Activated CD4-positive, alpha-beta T cell treated with anti-CD3 and anti-CD28 coated beads, Interleukin-2, amount 10 ng/mL, durations not matched to agents 24 days and 14 days (primary cell): ENCODE measurements at regions of chr2 and their contacts with region 1.

Region 1: GRCh38 chr2:10079870-10080535 is at the start of gene CYS1:
- DNase-seq: peak; percentile 78
- H3K4me3 Mint-ChIP-seq: peak within 1 kb of the TSS; percentile 81
- H3K27ac Mint-ChIP-seq: peak within 1 kb of the TSS; percentile 75
- H3K4me1 Mint-ChIP-seq: peaks cover 30% of the 10 kb centered on the region
- H3K27me3 Mint-ChIP-seq: peaks cover 73% of the 10 kb centered on the region
- total RNA-seq, gene CYS1: 0.24 and 0.63 TPM in 2 replicates

Region 2: DNA sequence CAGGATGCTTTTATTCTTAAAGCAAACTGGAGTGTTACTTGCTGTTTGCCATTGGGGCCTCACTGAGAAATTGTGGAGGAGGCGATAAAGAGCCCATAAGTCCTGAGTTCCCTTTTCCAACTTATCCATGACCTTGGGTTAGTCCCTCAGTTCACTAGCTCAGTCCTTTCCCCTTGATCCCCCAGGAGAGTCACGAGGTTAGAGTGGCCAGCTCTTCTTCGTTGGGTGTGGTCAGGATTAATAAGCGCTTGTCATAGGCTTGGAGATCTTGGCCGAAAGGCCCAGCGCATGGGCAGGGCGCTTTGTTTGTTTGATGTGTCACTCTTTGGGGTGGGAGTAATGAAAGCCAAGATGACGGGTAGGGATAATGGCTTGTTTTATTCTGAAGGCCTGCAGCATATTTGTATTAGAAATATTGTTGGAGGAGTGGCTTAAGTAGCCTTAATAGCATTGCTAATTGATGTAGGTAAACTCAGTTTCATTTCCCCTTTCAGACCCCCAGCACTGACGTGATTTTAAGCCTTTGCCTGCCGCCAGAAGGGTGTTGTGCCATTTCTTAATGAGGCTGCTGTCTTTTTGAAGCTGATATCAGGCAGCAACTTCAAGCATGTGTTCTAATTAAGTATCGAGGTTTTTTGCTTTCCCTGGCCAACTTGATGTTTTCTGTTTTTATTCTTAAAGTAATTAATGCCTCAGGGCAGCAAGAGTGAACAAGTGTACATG is 112.8 kb before region 1 on chr2:
- intact Hi-C with region 1: no loop called
- DNase-seq: no peak
- H3K4me3 Mint-ChIP-seq: no peak overlapping the region
- H3K27ac Mint-ChIP-seq: no peak overlapping the region
- H3K4me1 Mint-ChIP-seq: peaks cover 14% of the 10 kb centered on the region
- H3K27me3 Mint-ChIP-seq: peaks cover 3% of the 10 kb centered on the region

Region 3: DNA sequence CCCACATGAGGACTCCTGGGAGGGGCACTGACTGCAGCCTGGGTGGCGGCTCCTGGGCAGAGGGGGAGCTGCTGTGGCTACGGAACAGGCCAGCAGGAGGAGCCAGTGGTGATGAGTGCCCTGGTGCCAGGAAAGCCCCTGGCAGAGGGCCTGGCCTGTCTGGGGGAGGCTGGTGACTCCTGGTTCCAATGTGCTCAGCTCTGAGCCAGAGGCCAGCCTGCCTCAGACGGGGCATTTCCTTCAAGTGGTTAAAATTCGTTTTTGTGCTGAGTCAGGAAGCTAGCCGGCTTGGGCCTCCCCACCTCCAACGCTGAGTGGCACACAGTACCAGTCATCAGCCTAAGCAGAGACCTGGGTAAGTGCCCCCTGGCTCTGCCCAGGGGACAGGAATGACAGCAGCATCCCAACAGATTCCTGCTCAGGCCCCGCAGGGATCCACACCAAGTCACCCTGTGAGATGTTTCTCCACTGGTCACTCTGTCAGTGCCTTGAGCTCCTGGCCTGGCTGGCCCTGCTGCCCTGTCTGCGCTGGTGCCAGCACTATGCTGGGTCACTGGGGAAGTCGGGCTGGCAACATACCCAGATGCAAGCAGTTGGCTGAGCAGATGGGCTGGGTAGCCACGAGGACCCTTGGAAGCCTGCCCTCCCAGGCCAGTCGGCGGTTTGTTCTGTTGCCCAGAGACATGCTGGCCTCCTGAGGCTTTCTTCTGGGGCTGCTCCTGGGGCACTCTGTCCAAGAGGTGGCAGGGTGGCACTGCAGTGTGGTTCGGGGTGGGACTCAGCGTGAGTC is 43.7 kb before region 1 on chr2:
- intact Hi-C with region 1: no loop called
- DNase-seq: no peak
- H3K4me3 Mint-ChIP-seq: no peak overlapping the region
- H3K27ac Mint-ChIP-seq: no peak overlapping the region
- H3K4me1 Mint-ChIP-seq: peaks cover 4% of the 10 kb centered on the region
- H3K27me3 Mint-ChIP-seq: peaks cover 21% of the 10 kb centered on the region

Region 4: GRCh38 chr2:10097352-10098148 is 17.5 kb after region 1 on chr2:
- intact Hi-C with region 1: loop called (anchors 1 kb)
- DNase-seq: peak; percentile 81
- H3K4me3 Mint-ChIP-seq: no peak overlapping the region
- H3K27ac Mint-ChIP-seq: no peak overlapping the region
- H3K4me1 Mint-ChIP-seq: peaks cover 7% of the 10 kb centered on the region
- H3K27me3 Mint-ChIP-seq: peaks cover 36% of the 10 kb centered on the region